ENCODE measurements at regions of chr11 and their contacts with region 1.

Region 1: GRCh38 chr11:124875943-124876817 is 10.9 kb downstream of the ROBO3 start:
- H3K4me3 Mint-ChIP-seq: peak overlapping the region; percentile 86
- H3K27ac Mint-ChIP-seq: peak overlapping the region; percentile 90
- H3K4me1 Mint-ChIP-seq: peaks cover 57% of the 10 kb centered on the region
- H3K27me3 Mint-ChIP-seq: peaks cover 69% of the 10 kb centered on the region

Region 2: GRCh38 chr11:124892750-124893454 is 16.7 kb after region 1 on chr11:
- intact Hi-C with region 1: loop called (anchors 1 kb)
- H3K4me3 Mint-ChIP-seq: no peak overlapping the region
- H3K27ac Mint-ChIP-seq: peak overlapping the region; percentile 76
- H3K4me1 Mint-ChIP-seq: peaks cover 68% of the 10 kb centered on the region
- H3K27me3 Mint-ChIP-seq: peaks cover 3% of the 10 kb centered on the region